Naive thymus-derived CD4-positive, alpha-beta T cell (primary cell): ENCODE measurements at regions of chr4 and their contacts with region 1.

Region 1: GRCh38 chr4:78766650-78767049 is 9.5 kb upstream of the BMP2K start:
- DNase-seq: no peak
- ATAC-seq: no peak
- H3K4me3 ChIP-seq: no peak overlapping the region
- H3K4me3 Mint-ChIP-seq: no peak overlapping the region
- H3K27ac ChIP-seq: no peak overlapping the region
- H3K27ac Mint-ChIP-seq: no peak overlapping the region
- H3K4me1 ChIP-seq: no peaks in the 10 kb centered on the region
- H3K4me1 Mint-ChIP-seq: peaks cover 0 to 24% (median 3%) of the 10 kb centered on the region in 7 donors
- H3K27me3 ChIP-seq: no peaks in the 10 kb centered on the region
- H3K27me3 Mint-ChIP-seq: peaks cover 0 to 5% (median 0%) of the 10 kb centered on the region in 5 donors

Region 2: GRCh38 chr4:78650091-78651024 is 116.3 kb before region 1 on chr4:
- CTCF ChIA-PET with region 1: no interaction called
- POLR2A ChIA-PET with region 1: no interaction called
- intact Hi-C with region 1: no loop called
- DNase-seq: no peak
- ATAC-seq: no peak
- H3K4me3 ChIP-seq: no peak overlapping the region
- H3K4me3 Mint-ChIP-seq: no peak overlapping the region
- H3K27ac ChIP-seq: no peak overlapping the region
- H3K27ac Mint-ChIP-seq: peak overlapping the region in 1 of 9 donors; percentile 5
- H3K4me1 ChIP-seq: no peaks in the 10 kb centered on the region
- H3K4me1 Mint-ChIP-seq: peaks cover 7 to 15% (median 12%) of the 10 kb centered on the region in 7 donors
- H3K27me3 ChIP-seq: no peaks in the 10 kb centered on the region
- H3K27me3 Mint-ChIP-seq: no peaks in the 10 kb centered on the region

Region 3: GRCh38 chr4:78734441-78735162 is 32.0 kb before region 1 on chr4:
- CTCF ChIA-PET with region 1: no interaction called
- POLR2A ChIA-PET with region 1: no interaction called
- intact Hi-C with region 1: loop called in 1 of 2 experiments (anchors 2 kb)
- DNase-seq: no peak
- ATAC-seq: no peak
- H3K4me3 ChIP-seq: no peak overlapping the region
- H3K4me3 Mint-ChIP-seq: no peak overlapping the region
- H3K27ac ChIP-seq: no peak overlapping the region
- H3K27ac Mint-ChIP-seq: no peak overlapping the region
- H3K4me1 ChIP-seq: no peaks in the 10 kb centered on the region
- H3K4me1 Mint-ChIP-seq: peaks cover 0 to 19% (median 8%) of the 10 kb centered on the region in 7 donors
- H3K27me3 ChIP-seq: no peaks in the 10 kb centered on the region
- H3K27me3 Mint-ChIP-seq: peaks cover 0 to 2% (median 0%) of the 10 kb centered on the region in 5 donors

Region 4: GRCh38 chr4:79467246-79467932 is 700.7 kb after region 1 on chr4:
- CTCF ChIA-PET with region 1: no interaction called
- POLR2A ChIA-PET with region 1: no interaction called
- intact Hi-C with region 1: no loop called
- DNase-seq: no peak
- ATAC-seq: no peak
- H3K4me3 ChIP-seq: no peak overlapping the region
- H3K4me3 Mint-ChIP-seq: no peak overlapping the region
- H3K27ac ChIP-seq: no peak overlapping the region
- H3K27ac Mint-ChIP-seq: no peak overlapping the region
- H3K4me1 ChIP-seq: no peaks in the 10 kb centered on the region
- H3K4me1 Mint-ChIP-seq: no peaks in the 10 kb centered on the region
- H3K27me3 ChIP-seq: no peaks in the 10 kb centered on the region
- H3K27me3 Mint-ChIP-seq: peaks cover 0 to 19% (median 0%) of the 10 kb centered on the region in 5 donors